Heart right ventricle (tissue), 16 donors: ENCODE measurements at regions of chr1 and their contacts with region 1.

Region 1: DNA sequence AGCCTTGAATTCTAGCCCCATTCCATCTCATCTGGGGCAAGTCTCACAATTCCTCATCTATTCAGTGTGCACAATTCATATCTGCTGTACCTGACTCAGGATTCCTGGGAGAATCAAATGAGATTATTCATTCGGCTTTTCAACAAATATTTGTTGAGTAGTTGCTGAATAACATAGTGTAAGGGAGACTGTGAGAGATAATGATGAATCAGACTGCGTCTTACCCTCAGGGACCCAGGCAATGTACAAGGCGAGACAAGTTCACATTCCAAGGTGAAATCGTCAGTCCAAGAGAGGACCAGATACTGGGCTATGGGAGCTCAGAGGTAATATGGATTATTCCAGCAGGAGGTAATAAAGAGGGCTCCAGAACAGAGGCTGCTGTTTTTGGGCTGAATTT is 67.8 kb upstream of the SMYD2 start:
- DNase-seq: no peak
- ATAC-seq: no peak
- H3K4me3 ChIP-seq: no peak overlapping the region
- H3K27ac ChIP-seq: no peak overlapping the region
- H3K4me1 ChIP-seq: peaks cover 0 to 11% (median 4%) of the 10 kb centered on the region in 9 donors
- H3K27me3 ChIP-seq: peaks cover 0 to 5% (median 0%) of the 10 kb centered on the region in 7 donors
- CTCF ChIP-seq: no peak

Region 2: GRCh38 chr1:214261206-214262123 is 48.3 kb after region 1 on chr1:
- intact Hi-C with region 1: loop called in 2 of 10 experiments (anchors 1 to 5 kb)
- DNase-seq: peak; percentile 86 to 87
- ATAC-seq: peak; percentile 93 to 98 (median 96)
- H3K4me3 ChIP-seq: no peak overlapping the region
- H3K27ac ChIP-seq: peak overlapping the region in 7 of 10 donors; percentile 23 to 85 (median 66)
- H3K4me1 ChIP-seq: peaks cover 0 to 20% (median 7%) of the 10 kb centered on the region in 9 donors
- H3K27me3 ChIP-seq: peaks cover 0 to 67% (median 24%) of the 10 kb centered on the region in 7 donors
- CTCF ChIP-seq: peak; percentile 92 to 99 (median 98)

Region 3: GRCh38 chr1:214328770-214329469 is 115.8 kb after region 1 on chr1:
- intact Hi-C with region 1: loop called in 9 of 10 experiments (anchors 1 to 5 kb)
- DNase-seq: peak; percentile 74 to 83
- ATAC-seq: peak; percentile 83 to 91 (median 88)
- H3K4me3 ChIP-seq: no peak overlapping the region
- H3K27ac ChIP-seq: peak overlapping the region in 6 of 10 donors; percentile 31 to 86 (median 76)
- H3K4me1 ChIP-seq: peaks cover 6 to 62% (median 27%) of the 10 kb centered on the region in 9 donors
- H3K27me3 ChIP-seq: no peaks in the 10 kb centered on the region
- CTCF ChIP-seq: peak; percentile 83 to 96 (median 92)

Region 4: DNA sequence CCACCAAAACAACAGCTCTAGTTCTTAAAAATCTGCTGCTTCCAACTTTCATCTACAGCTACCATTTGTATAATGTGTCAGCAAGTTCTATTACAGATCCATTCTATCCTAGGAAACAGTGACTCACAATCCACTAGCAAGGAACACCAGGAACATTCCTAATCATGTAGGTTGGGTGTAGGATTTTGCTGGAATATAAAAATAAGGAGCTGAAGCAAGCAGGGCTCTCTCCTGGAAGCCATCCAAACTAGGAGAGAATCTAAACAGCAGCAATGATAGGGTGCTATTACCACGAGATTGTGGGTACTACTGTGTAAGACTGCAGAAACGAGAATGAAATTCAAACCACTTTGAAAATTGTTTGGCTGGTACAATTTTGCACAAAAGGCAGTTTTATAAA is 203.3 kb after region 1 on chr1:
- intact Hi-C with region 1: no loop called
- DNase-seq: no peak
- ATAC-seq: peak in 6 of 8 donors; percentile 53 to 76 (median 66)
- H3K4me3 ChIP-seq: no peak overlapping the region
- H3K27ac ChIP-seq: peak overlapping the region in 6 of 10 donors; percentile 2 to 69 (median 23)
- H3K4me1 ChIP-seq: peaks cover 4 to 59% (median 50%) of the 10 kb centered on the region in 9 donors
- H3K27me3 ChIP-seq: no peaks in the 10 kb centered on the region
- CTCF ChIP-seq: no peak

Region 5: GRCh38 chr1:214632091-214632490 is 419.0 kb after region 1 on chr1:
- intact Hi-C with region 1: loop called in 4 of 10 experiments (anchors 5 to 10 kb)
- DNase-seq: no peak
- ATAC-seq: no peak
- H3K4me3 ChIP-seq: no peak overlapping the region
- H3K27ac ChIP-seq: no peak overlapping the region
- H3K4me1 ChIP-seq: no peaks in the 10 kb centered on the region
- H3K27me3 ChIP-seq: no peaks in the 10 kb centered on the region
- CTCF ChIP-seq: no peak

Region 6: GRCh38 chr1:214637722-214638458 is 424.8 kb after region 1 on chr1:
- intact Hi-C with region 1: loop called in 3 of 10 experiments (anchors 5 to 10 kb)
- DNase-seq: no peak
- ATAC-seq: peak in 1 of 8 donors; percentile 47
- H3K4me3 ChIP-seq: no peak overlapping the region
- H3K27ac ChIP-seq: no peak overlapping the region
- H3K4me1 ChIP-seq: no peaks in the 10 kb centered on the region
- H3K27me3 ChIP-seq: no peaks in the 10 kb centered on the region
- CTCF ChIP-seq: peak; percentile 20 to 76 (median 67)